Heart right ventricle (tissue), 16 donors: ENCODE measurements at regions of chr6 and their contacts with region 1.

Region 1: GRCh38 chr6:50471041-50471440 is 242.3 kb upstream of the TFAP2D start:
- DNase-seq: no peak
- ATAC-seq: no peak
- H3K4me3 ChIP-seq: no peak overlapping the region
- H3K27ac ChIP-seq: no peak overlapping the region
- H3K4me1 ChIP-seq: no peaks in the 10 kb centered on the region
- H3K27me3 ChIP-seq: no peaks in the 10 kb centered on the region
- CTCF ChIP-seq: no peak

Region 2: DNA sequence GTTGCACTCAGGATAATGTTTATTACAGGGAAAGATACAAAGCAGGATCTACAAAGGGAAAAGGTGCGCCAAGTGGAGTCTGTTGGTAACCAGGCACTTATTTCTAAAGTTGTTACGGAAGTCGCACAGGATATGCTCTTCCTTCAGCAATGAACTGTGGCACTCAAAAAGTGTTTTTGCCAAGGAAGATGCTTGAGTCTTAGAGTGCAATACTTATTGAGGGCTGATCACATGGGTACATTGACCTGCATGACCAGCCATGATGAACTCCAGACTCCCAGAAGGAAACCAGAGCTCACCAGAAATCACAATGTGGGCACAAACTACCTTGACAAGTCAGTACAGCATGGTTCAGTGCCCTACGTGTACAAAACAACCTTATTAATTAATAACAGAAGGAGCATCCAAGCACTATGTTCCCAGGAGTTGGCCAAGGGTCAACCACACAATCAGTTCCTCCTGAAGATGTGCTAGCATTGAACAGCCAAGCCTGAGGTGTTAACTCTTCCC is 28.5 kb before region 1 on chr6:
- intact Hi-C with region 1: loop called in 1 of 10 experiments (anchors 1 kb)
- DNase-seq: no peak
- ATAC-seq: no peak
- H3K4me3 ChIP-seq: no peak overlapping the region
- H3K27ac ChIP-seq: no peak overlapping the region
- H3K4me1 ChIP-seq: no peaks in the 10 kb centered on the region
- H3K27me3 ChIP-seq: no peaks in the 10 kb centered on the region
- CTCF ChIP-seq: no peak